HCT116 (cell line): ENCODE measurements at regions of chr9 and their contacts with region 1.

Region 1: GRCh38 chr9:31418419-31418818 is 966.0 kb upstream of the ACO1 start:
- DNase-seq: no peak
- ATAC-seq: no peak
- H3K4me3 ChIP-seq: no peak overlapping the region
- H3K27ac ChIP-seq: no peak overlapping the region
- H3K4me1 ChIP-seq: no peaks in the 10 kb centered on the region
- H3K27me3 ChIP-seq: no peaks in the 10 kb centered on the region
- CTCF ChIP-seq: no peak
- POLR2A ChIP-seq: no peak
- RAD21 ChIP-seq: no peak

Region 2: GRCh38 chr9:31372799-31373587 is 45.4 kb before region 1 on chr9:
- CTCF ChIA-PET with region 1: no interaction called
- POLR2A ChIA-PET with region 1: no interaction called
- RAD21 ChIA-PET with region 1: no interaction called
- intact Hi-C with region 1: loop called (anchors 10 kb)
- DNase-seq: no peak
- ATAC-seq: no peak
- H3K4me3 ChIP-seq: no peak overlapping the region
- H3K27ac ChIP-seq: no peak overlapping the region
- H3K4me1 ChIP-seq: no peaks in the 10 kb centered on the region
- H3K27me3 ChIP-seq: no peaks in the 10 kb centered on the region
- CTCF ChIP-seq: no peak
- POLR2A ChIP-seq: no peak
- RAD21 ChIP-seq: no peak